Calu3 (cell line): ENCODE measurements at regions of chr11 and their contacts with region 1.

Region 1: GRCh38 chr11:102287964-102288724 is 29.1 kb upstream of the BIRC3 start:
- DNase-seq: peak; percentile 45
- H3K4me3 Mint-ChIP-seq: peak overlapping the region; percentile 34
- H3K27ac Mint-ChIP-seq: peak overlapping the region; percentile 11
- H3K4me1 Mint-ChIP-seq: peaks cover 34% of the 10 kb centered on the region
- H3K27me3 Mint-ChIP-seq: no peaks in the 10 kb centered on the region
- CTCF ChIP-seq: peak; percentile 42

Region 2: GRCh38 chr11:100827934-100828661 is 1460.0 kb before region 1 on chr11:
- CTCF ChIA-PET with region 1: interaction called, 15 read pairs
- intact Hi-C with region 1: no loop called
- DNase-seq: peak; percentile 68
- H3K4me3 Mint-ChIP-seq: no peak overlapping the region
- H3K27ac Mint-ChIP-seq: peak overlapping the region; percentile 83
- H3K4me1 Mint-ChIP-seq: peaks cover 26% of the 10 kb centered on the region
- H3K27me3 Mint-ChIP-seq: no peaks in the 10 kb centered on the region
- CTCF ChIP-seq: no peak

Region 3: GRCh38 chr11:102268329-102269193 is 19.6 kb before region 1 on chr11:
- CTCF ChIA-PET with region 1: interaction called, 10 read pairs
- intact Hi-C with region 1: no loop called
- DNase-seq: peak; percentile 90
- H3K4me3 Mint-ChIP-seq: peak overlapping the region; percentile 73
- H3K27ac Mint-ChIP-seq: peak overlapping the region; percentile 87
- H3K4me1 Mint-ChIP-seq: peaks cover 35% of the 10 kb centered on the region
- H3K27me3 Mint-ChIP-seq: no peaks in the 10 kb centered on the region
- CTCF ChIP-seq: no peak

Region 4: DNA sequence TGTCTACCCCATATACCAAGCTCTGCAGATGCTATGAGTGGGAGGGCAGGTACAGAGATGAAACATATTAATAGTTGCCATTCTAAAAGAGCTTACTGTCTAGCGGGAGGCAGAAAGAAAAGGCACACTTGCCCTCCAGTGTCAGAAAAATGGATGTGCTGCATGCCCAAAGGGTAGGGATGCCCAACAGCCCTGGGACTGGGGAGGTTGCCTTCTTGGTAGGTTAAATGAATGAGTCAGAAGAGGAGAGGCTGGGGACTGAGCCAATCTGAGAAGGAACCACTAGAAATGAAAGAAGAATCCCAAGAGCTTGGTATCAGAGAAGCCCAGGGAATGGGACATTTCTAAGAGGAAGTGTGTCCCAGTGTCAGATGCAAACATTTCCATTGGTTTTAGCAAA is 30.3 kb after region 1 on chr11:
- CTCF ChIA-PET with region 1: interaction called, 11 read pairs
- intact Hi-C with region 1: loop called (anchors 1 kb)
- DNase-seq: peak; percentile 43
- H3K4me3 Mint-ChIP-seq: peak overlapping the region; percentile 74
- H3K27ac Mint-ChIP-seq: peak overlapping the region; percentile 96
- H3K4me1 Mint-ChIP-seq: peaks cover 44% of the 10 kb centered on the region
- H3K27me3 Mint-ChIP-seq: no peaks in the 10 kb centered on the region
- CTCF ChIP-seq: no peak

Region 5: DNA sequence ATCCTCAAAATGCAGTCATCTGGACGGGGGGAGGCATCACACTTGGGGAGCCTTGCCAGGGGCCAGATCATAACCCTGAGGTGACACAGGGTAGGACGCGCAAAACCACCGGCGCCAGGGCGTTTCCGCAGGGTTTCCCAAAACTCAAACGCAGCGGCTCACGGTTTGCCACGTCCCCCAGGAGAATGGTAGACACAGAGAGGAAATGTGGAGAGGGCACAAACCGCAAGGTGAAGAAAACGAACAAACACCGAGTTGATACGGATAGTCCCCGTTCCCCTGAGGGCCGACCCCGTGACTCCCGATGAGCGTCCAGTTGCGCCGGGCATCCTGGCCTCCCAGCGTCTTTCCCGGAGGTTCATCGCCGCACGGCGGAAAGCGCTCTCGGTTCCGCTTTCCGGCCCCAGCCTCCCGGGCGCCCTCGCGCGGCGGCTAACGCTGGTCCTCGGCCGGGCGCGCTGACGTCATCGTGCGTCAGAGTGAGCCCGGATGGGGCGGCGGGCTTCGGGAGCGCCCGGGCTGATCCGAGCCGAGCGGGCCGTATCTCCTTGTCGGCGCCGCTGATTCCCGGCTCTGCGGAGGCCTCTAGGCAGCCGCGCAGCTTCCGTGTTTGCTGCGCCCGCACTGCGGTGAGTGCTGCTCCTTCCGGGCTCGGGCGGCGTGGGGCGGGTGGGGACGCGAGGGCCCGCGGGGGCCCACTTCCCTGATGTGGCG is 58.8 kb after region 1 on chr11 and contains the start of gene BIRC2:
- CTCF ChIA-PET with region 1: interaction called, 3 read pairs
- intact Hi-C with region 1: loop called (anchors 2 kb)
- DNase-seq: peak; percentile 94
- H3K4me3 Mint-ChIP-seq: peak within 1 kb of the TSS; percentile 77
- H3K27ac Mint-ChIP-seq: peak within 1 kb of the TSS; percentile 90
- H3K4me1 Mint-ChIP-seq: peaks cover 14% of the 10 kb centered on the region
- H3K27me3 Mint-ChIP-seq: no peaks in the 10 kb centered on the region
- CTCF ChIP-seq: no peak
- total RNA-seq, gene BIRC2: 28.3 and 32.6 TPM in 2 replicates

Region 6: DNA sequence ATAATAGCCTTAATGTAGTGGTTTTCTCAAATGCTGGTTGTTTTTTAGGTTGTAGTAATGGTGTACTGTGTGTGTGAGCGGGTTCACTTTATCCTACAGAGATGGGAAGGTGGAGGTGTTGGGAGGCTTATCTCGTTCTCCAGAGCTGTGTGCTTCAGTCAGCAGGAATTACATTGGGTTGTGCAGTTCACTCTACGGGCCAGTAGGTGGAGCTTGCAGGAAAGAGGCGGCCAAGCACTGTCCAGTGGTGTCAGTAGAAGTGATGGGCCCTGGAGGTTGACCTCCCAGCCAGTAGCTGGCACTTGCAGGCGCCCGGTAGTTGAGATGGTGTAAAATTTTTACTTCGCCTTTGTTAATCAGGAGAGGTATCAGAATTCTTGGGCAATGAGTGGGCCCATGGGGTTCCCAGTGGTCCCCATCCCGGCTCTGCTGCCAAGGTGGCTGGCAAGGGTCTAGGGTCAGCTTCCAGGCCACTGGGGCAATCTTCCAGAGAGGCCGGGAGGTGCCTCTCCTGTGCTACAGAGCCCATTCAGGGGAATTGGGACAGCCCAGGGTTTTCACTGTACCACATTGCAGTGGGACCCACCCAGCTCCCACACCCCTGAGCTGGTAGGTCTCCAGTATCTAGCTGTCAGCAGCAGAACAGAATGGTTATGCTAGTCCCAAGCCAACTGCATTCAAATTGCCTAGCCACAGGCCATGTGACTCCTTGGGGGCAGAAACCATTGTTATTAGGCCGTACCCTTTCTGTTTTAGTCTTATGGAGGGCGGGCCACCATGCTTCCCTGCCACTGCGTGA is 102.7 kb after region 1 on chr11:
- CTCF ChIA-PET with region 1: no interaction called
- intact Hi-C with region 1: no loop called
- DNase-seq: peak; percentile 64
- H3K4me3 Mint-ChIP-seq: no peak overlapping the region
- H3K27ac Mint-ChIP-seq: no peak overlapping the region
- H3K4me1 Mint-ChIP-seq: peaks cover 15% of the 10 kb centered on the region
- H3K27me3 Mint-ChIP-seq: no peaks in the 10 kb centered on the region
- CTCF ChIP-seq: peak; percentile 77

Region 7: GRCh38 chr11:102614485-102614884 is 326.3 kb after region 1 on chr11:
- CTCF ChIA-PET with region 1: no interaction called
- intact Hi-C with region 1: loop called (anchors 5 kb)
- DNase-seq: no peak
- H3K4me3 Mint-ChIP-seq: no peak overlapping the region
- H3K27ac Mint-ChIP-seq: no peak overlapping the region
- H3K4me1 Mint-ChIP-seq: peaks cover 35% of the 10 kb centered on the region
- H3K27me3 Mint-ChIP-seq: no peaks in the 10 kb centered on the region
- CTCF ChIP-seq: no peak